Activated CD4-positive, alpha-beta memory T cell treated with anti-CD3 and anti-CD28 coated beads for 36 hours (primary cell): ENCODE measurements at regions of chr17 and their contacts with region 1.

Region 1: DNA sequence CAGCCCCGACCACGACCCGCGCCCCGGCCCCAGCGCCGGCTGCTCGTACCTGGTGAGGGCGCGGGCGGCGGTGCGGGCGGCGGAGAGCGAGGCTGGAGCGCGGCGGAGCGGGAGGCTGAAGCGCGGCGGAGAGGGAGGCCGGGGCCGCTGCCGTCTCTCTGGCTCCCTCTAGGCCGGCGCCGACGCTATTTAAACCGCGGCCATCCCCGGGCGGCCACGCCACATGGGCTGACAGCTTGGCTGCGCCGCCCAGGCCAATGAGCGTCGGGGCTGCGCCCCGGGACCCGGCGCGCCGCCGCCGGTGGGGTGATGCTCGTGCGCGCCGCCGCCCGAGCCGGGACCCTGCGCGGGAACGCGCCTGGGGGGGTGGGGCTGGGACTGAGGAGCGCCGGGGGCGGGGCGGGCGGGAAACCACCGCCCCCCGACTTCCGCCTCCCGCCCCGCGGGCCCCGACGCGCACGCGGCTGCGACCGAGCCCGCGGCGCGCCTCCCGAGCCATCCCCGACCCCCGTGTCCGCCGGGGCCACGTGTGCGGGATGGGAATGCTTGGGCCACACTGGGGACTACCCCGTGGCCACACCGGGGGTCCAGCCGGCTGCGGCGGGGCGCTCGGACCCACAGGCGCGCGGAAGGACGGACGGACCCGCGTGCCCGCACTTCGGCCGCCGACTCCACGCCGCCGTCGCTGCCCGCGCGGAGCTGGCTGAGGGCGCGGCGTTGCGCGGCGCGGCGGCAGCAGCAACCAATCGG is at the start of gene FASN:
- DNase-seq: peak; percentile 95
- H3K4me3 Mint-ChIP-seq: peak within 1 kb of the TSS; percentile 71
- H3K27ac Mint-ChIP-seq: peak within 1 kb of the TSS; percentile 69
- H3K4me1 Mint-ChIP-seq: peaks cover 12% of the 10 kb centered on the region
- H3K27me3 Mint-ChIP-seq: no peaks in the 10 kb centered on the region
- total RNA-seq, gene FASN: 209 to 212 TPM

Region 2: GRCh38 chr17:81871387-81872230 is 226.6 kb before region 1 on chr17:
- CTCF ChIA-PET with region 1: no interaction called
- POLR2A ChIA-PET with region 1: no interaction called
- intact Hi-C with region 1: loop called (anchors 5 kb)
- DNase-seq: peak; percentile 96
- H3K4me3 Mint-ChIP-seq: peak overlapping the region; percentile 85
- H3K27ac Mint-ChIP-seq: peak overlapping the region; percentile 94
- H3K4me1 Mint-ChIP-seq: peaks cover 45% of the 10 kb centered on the region
- H3K27me3 Mint-ChIP-seq: no peaks in the 10 kb centered on the region

Region 3: GRCh38 chr17:82022981-82023374 is 75.3 kb before region 1 on chr17 and contains the start of gene LRRC45:
- CTCF ChIA-PET with region 1: interaction called, 7 read pairs
- POLR2A ChIA-PET with region 1: interaction called, 5 read pairs
- intact Hi-C with region 1: loop called (anchors 1 kb)
- DNase-seq: peak; percentile 100
- H3K4me3 Mint-ChIP-seq: peak within 1 kb of the TSS; percentile 84
- H3K27ac Mint-ChIP-seq: peak within 1 kb of the TSS; percentile 66
- H3K4me1 Mint-ChIP-seq: peaks cover 24% of the 10 kb centered on the region
- H3K27me3 Mint-ChIP-seq: no peaks in the 10 kb centered on the region
- total RNA-seq, gene LRRC45: 16.3 to 19.0 TPM

Region 4: DNA sequence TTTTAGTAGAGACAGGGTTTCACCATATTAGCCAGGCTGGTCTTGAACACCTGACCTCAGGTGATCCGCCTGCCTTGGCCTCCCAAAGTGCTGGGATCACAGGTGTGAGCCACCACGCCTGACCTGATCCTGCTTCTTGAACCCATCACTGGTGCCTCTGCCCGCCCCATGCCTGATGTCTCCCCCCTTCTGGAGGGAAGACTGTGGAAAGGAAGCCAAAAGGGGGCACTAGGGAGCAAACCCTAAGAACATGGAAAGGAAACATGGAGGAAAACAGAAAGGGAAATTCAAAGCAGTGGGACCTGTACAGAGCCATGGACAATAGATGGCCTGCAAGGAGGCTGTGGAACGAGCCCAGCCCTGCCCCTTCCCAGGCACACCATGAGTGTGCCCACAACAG is 30.8 kb after region 1 on chr17:
- CTCF ChIA-PET with region 1: no interaction called
- POLR2A ChIA-PET with region 1: interaction called, 5 read pairs
- intact Hi-C with region 1: loop called (anchors 1 kb)
- DNase-seq: no peak
- H3K4me3 Mint-ChIP-seq: no peak overlapping the region
- H3K27ac Mint-ChIP-seq: no peak overlapping the region
- H3K4me1 Mint-ChIP-seq: peaks cover 36% of the 10 kb centered on the region
- H3K27me3 Mint-ChIP-seq: no peaks in the 10 kb centered on the region

Region 5: DNA sequence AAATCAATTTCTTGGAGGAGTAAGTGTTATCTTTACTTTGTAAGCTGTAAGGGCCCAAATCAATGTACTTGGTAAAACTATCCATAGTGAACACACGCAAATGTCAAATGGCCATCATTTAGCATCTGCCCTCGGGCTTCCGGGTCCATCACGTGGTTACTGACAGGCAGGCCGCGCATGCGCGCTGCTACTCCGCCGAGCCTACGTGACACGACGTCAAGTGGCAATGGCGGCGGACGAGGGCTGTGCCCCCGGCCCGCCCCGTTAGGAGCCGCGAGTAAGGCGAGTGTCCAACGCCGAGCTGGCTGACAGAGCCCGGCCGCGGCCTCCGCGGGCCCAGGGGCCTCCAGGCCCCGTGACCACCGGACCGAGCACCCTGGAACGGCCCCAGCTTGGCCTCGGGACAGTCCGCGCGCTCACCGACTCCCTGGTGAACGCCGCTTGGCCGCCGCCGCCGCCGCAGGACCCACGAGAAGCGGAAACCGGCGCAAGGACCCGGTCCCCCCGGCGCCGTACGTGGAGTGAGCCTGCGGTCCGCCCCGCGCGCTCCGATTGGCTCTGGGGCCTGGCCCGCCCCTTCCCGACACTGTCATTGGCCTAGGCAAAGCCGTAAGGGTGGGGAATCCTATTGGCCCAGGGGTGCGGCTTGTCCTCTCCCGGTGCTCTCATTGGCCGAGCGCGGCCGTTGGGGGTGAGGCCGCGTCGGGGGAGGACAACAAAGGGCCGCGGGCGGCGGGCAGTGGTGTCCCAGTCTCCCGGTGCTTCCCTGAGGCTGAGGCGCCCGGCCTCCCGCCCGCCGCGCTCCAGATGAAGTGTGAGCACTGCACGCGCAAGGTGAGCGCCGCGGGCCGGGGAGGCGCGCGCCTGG is 360.0 kb after region 1 on chr17 and contains the start of gene NARF:
- CTCF ChIA-PET with region 1: no interaction called
- POLR2A ChIA-PET with region 1: no interaction called
- intact Hi-C with region 1: loop called (anchors 10 kb)
- DNase-seq: peak; percentile 97
- H3K4me3 Mint-ChIP-seq: peak within 1 kb of the TSS; percentile 78
- H3K27ac Mint-ChIP-seq: peak within 1 kb of the TSS; percentile 97
- H3K4me1 Mint-ChIP-seq: peaks cover 40% of the 10 kb centered on the region
- H3K27me3 Mint-ChIP-seq: no peaks in the 10 kb centered on the region
- total RNA-seq, gene NARF: 101 to 110 TPM